ENCODE measurements at regions of chr6 and their contacts with region 1.

Region 1: DNA sequence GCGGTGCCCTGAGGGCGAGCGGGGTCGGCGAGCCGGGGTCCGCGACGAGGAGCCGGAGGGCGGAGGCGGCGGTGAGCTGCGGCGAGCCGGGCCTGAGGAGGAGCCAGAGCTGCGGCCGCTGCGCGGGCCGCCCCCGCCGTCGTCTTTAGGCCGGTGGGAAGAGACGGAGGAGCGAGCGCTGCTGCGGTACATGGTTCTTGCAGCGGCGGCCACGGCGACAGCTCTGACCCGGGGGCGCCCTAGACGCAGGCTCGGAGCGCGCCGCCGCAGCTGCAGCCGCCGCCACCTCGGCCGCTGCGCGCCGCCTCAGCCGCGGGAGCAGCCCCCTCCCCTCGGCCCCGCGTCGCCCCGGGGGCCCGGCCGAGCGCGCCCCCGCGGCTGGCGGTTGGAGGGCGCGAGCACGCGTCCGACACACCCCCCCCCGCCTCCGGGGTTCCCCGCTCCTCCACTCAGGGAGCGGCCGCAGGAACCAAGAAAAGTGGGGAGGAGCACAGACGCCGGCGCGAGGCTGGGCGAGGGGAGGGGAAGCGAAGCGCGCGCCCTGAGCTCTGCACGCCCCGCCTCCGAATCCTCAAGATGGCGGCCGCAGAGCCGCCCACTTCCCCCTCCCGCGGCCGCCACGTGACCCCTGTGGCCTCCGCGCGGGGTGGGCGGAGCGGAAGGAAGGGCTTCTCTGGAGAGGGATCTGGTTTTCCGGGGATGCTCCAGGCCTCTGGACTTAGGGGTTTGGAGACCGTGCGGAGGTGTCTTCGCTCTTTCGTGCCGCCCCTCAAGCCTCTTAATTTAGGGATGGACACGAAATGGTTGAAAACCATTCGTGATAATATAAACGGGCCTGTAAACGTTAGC is at the start of gene ZNF318:
- DNase-seq: peak; percentile 91 to 98 (median 96)
- H3K4me3 ChIP-seq: peak within 1 kb of the TSS; percentile 59 to 92 (median 81)
- H3K27ac ChIP-seq: peak within 1 kb of the TSS; percentile 62 to 98 (median 93)
- H3K27me3 ChIP-seq: no peaks in the 10 kb centered on the region
- CTCF ChIP-seq: peak in 17 of 56 donors; percentile 12 to 50 (median 25)
- total RNA-seq, gene ZNF318: 27.9 to 56.2 (median 41.8) TPM

Region 2: GRCh38 chr6:42911171-42912021 is 458.0 kb before region 1 on chr6:
- intact Hi-C with region 1: loop called in 1 of 2 experiments (anchors 10 kb)
- DNase-seq: peak in 1 of 10 donors; percentile 7
- H3K4me3 ChIP-seq: peak overlapping the region in 54 of 59 donors; percentile 7 to 62 (median 43)
- H3K27ac ChIP-seq: no peak overlapping the region
- H3K27me3 ChIP-seq: peaks cover 0 to 20% (median 0%) of the 10 kb centered on the region in 45 donors
- CTCF ChIP-seq: no peak

Region 3: GRCh38 chr6:43228951-43229802 is 140.2 kb before region 1 on chr6 and contains the start of gene DNPH1:
- intact Hi-C with region 1: loop called in 1 of 2 experiments (anchors 5 kb)
- DNase-seq: peak; percentile 62 to 93 (median 73)
- H3K4me3 ChIP-seq: peak within 1 kb of the TSS; percentile 43 to 84 (median 72)
- H3K27ac ChIP-seq: peak within 1 kb of the TSS in 48 of 59 donors; percentile 0 to 83 (median 60)
- H3K27me3 ChIP-seq: no peaks in the 10 kb centered on the region
- CTCF ChIP-seq: peak; percentile 72 to 98 (median 94)
- total RNA-seq, gene DNPH1: 18.4 to 54.6 (median 31.2) TPM

Region 4: GRCh38 chr6:43454696-43455530 is 85.5 kb after region 1 on chr6:
- intact Hi-C with region 1: no loop called
- DNase-seq: peak; percentile 48 to 94 (median 86)
- H3K4me3 ChIP-seq: peak overlapping the region; percentile 38 to 80 (median 63)
- H3K27ac ChIP-seq: peak overlapping the region in 47 of 59 donors; percentile 2 to 87 (median 63)
- H3K27me3 ChIP-seq: peaks cover 0 to 6% (median 0%) of the 10 kb centered on the region in 45 donors
- CTCF ChIP-seq: peak in 21 of 56 donors; percentile 2 to 51 (median 14)

Region 5: DNA sequence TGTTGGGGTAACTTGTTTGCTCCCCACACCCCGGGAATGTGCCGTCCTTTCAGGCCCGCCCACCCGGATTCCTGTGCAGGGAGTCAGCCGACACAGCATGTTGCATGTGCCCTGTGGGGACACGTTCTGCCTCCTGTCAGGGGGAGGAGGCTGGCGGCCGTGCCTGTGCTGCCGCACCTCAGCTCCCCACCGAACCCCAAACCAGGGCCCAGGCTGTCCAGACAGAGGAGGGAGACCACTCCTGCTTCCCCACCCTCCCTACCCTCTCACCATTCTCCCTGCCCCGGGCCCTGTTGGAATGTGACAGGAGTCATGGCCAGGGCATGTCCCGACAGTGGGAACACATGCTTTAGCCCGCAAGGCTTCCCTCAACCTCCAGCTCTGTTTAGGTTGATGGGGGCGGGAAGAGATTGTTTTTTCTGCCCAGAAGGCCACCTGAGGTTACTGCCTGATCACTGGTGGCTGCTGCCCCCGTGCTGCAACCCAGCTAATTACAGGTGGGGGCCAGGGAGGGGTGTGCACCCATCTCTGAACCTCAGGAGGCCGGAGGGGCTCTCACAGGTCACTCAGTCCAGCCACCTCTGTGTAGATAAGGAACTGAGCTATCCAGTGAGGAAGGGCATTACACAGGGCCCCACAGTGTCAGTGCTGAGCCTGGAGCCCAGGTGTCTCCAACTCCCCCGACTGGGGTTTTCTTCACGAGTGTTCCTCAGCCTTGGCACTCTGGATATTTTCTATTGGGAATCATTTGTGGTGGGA is 127.2 kb after region 1 on chr6:
- intact Hi-C with region 1: loop called in 1 of 2 experiments (anchors 5 kb)
- DNase-seq: peak in 3 of 10 donors; percentile 54 to 74 (median 58)
- H3K4me3 ChIP-seq: peak overlapping the region in 6 of 59 donors; percentile 6 to 30 (median 17)
- H3K27ac ChIP-seq: peak overlapping the region in 19 of 59 donors; percentile 18 to 83 (median 56)
- H3K27me3 ChIP-seq: no peaks in the 10 kb centered on the region
- CTCF ChIP-seq: peak; percentile 45 to 86 (median 72)

Region 6: GRCh38 chr6:43516697-43517504 is 147.5 kb after region 1 on chr6 and contains the starts of genes POLR1C and YIPF3:
- intact Hi-C with region 1: loop called in 1 of 2 experiments (anchors 1 kb)
- DNase-seq: peak; percentile 96 to 99 (median 98)
- H3K4me3 ChIP-seq: peak within 1 kb of the TSS; percentile 66 to 100 (median 92)
- H3K27ac ChIP-seq: peak within 1 kb of the TSS; percentile 10 to 96 (median 88)
- H3K27me3 ChIP-seq: no peaks in the 10 kb centered on the region
- CTCF ChIP-seq: peak in 21 of 56 donors; percentile 9 to 56 (median 27)
- total RNA-seq, gene POLR1C: 13.6 to 34.4 (median 23.6) TPM
- total RNA-seq, gene YIPF3: 57.9 to 94.9 (median 76.6) TPM

Measured in dorsolateral prefrontal cortex (tissue), 120 donors.